ENCODE measurements at regions of chr1 and their contacts with region 1.

Region 1: DNA sequence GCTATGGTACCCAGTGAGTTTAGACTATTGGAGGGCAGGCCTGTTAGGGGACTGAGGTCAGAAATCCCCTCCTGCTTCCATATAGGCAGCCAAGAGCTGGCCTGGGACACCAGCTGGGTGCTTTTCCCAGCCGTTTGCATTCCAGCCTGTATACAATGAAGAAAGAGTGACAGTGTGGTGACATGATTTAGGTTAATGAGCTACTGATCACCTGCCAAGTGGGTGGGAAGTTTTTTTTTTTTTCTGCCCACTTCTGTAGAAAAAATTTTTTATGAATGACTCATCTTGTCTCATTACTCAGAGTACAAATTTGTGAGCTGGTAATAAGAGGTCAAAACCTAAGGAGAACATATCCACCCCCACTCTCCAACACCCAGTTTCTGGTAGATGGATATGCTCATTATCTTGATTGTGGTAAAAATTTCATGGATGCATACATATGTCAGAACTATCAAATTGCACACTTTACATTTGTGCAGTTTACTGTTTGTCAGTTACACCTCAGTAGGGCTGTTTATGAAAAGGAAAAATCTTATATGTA is 16.4 kb upstream of the CGN start:
- DNase-seq: peak; percentile 61
- ATAC-seq: peak; percentile 84
- H3K4me3 ChIP-seq: no peak overlapping the region
- H3K27ac ChIP-seq: no peak overlapping the region
- H3K4me1 ChIP-seq: peaks cover 11% of the 10 kb centered on the region; the same call in 1 of the 2 replicates
- H3K27me3 ChIP-seq: no peaks in the 10 kb centered on the region
- CTCF ChIP-seq: no peak

Region 2: GRCh38 chr1:151475175-151475574 is 19.6 kb before region 1 on chr1:
- CTCF ChIA-PET with region 1: no interaction called
- POLR2A ChIA-PET with region 1: interaction called, 10 read pairs
- in situ Hi-C with region 1: no loop called
- intact Hi-C with region 1: no loop called
- DNase-seq: no peak
- ATAC-seq: no peak
- H3K4me3 ChIP-seq: no peak overlapping the region
- H3K27ac ChIP-seq: no peak overlapping the region
- H3K4me1 ChIP-seq: peaks cover 4% of the 10 kb centered on the region
- H3K27me3 ChIP-seq: no peaks in the 10 kb centered on the region
- CTCF ChIP-seq: no peak